Esophagus muscularis mucosa (tissue), 4 donors: ENCODE measurements at regions of chr16 and their contacts with region 1.

Region 1: GRCh38 chr16:56608043-56608875 is at the start of gene MT2A:
- DNase-seq: peak; percentile 98
- H3K4me3 ChIP-seq: peak within 1 kb of the TSS; percentile 56 to 67 (median 62)
- H3K27ac ChIP-seq: peak within 1 kb of the TSS; percentile 84 to 96 (median 92)
- H3K4me1 ChIP-seq: peaks cover 54 to 65% (median 60%) of the 10 kb centered on the region in 4 donors
- H3K27me3 ChIP-seq: no peaks in the 10 kb centered on the region
- CTCF ChIP-seq: no peak
- EP300 ChIP-seq: peak; percentile 97
- POLR2A ChIP-seq: peak; percentile 90
- total RNA-seq, gene MT2A: 27.0 to 528 (median 116) TPM

Region 2: DNA sequence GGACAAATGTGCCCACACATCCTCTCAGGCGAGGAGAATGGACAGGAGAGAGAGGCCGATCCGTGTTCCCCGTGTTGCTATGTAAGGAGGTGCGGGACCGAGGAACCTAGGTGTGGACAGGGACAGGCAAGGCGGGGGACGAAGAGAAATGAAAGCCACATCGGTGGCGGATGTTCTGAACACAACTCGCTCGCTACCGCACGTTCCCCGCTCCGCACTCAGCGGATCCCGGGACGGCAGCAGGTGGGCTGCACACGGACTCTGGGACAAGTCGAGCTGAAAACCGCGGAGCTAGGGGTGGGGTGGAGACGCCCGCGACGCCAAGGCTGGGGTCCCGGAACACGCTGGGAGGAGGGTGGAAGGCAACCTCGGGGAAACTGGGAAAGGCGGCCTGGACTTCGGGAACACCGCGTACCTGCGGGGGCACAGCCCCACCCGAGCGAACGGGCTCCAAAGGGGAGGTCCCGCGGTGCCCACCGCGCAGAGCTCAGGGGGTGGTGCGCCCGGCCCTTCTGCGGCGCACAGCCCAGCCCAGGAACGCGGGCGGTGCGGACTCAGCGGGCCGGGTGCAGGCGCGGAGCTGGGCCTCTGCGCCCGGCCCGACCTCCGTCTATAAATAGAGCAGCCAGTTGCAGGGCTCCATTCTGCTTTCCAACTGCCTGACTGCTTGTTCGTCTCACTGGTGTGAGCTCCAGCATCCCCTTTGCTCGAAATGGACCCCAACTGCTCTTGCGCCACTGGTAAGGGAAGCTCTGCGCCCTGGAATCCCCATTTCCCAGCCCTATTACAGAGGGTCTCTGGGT is 17.1 kb after region 1 on chr16 and contains the start of gene MT1E:
- intact Hi-C with region 1: loop called (anchors 2 kb)
- DNase-seq: no peak
- H3K4me3 ChIP-seq: peak within 1 kb of the TSS; percentile 61 to 78 (median 72)
- H3K27ac ChIP-seq: peak within 1 kb of the TSS; percentile 88 to 94 (median 92)
- H3K4me1 ChIP-seq: peaks cover 20 to 40% (median 30%) of the 10 kb centered on the region in 4 donors
- H3K27me3 ChIP-seq: no peaks in the 10 kb centered on the region
- CTCF ChIP-seq: no peak
- EP300 ChIP-seq: peak; percentile 92
- POLR2A ChIP-seq: peak; percentile 92
- total RNA-seq, gene MT1E: 57.7 to 428 (median 146) TPM

Region 3: GRCh38 chr16:56681939-56682702 is 73.9 kb after region 1 on chr16 and contains the start of gene MT1X:
- intact Hi-C with region 1: loop called (anchors 2 kb)
- DNase-seq: peak; percentile 98
- H3K4me3 ChIP-seq: peak within 1 kb of the TSS; percentile 51 to 68 (median 62)
- H3K27ac ChIP-seq: peak within 1 kb of the TSS; percentile 67 to 86 (median 84)
- H3K4me1 ChIP-seq: peaks cover 35 to 50% (median 42%) of the 10 kb centered on the region in 4 donors
- H3K27me3 ChIP-seq: peaks cover 0 to 3% (median 0%) of the 10 kb centered on the region in 4 donors
- CTCF ChIP-seq: no peak
- EP300 ChIP-seq: peak; percentile 98
- POLR2A ChIP-seq: peak; percentile 99
- total RNA-seq, gene MT1X: 283 to 1,221 (median 512) TPM

Region 4: DNA sequence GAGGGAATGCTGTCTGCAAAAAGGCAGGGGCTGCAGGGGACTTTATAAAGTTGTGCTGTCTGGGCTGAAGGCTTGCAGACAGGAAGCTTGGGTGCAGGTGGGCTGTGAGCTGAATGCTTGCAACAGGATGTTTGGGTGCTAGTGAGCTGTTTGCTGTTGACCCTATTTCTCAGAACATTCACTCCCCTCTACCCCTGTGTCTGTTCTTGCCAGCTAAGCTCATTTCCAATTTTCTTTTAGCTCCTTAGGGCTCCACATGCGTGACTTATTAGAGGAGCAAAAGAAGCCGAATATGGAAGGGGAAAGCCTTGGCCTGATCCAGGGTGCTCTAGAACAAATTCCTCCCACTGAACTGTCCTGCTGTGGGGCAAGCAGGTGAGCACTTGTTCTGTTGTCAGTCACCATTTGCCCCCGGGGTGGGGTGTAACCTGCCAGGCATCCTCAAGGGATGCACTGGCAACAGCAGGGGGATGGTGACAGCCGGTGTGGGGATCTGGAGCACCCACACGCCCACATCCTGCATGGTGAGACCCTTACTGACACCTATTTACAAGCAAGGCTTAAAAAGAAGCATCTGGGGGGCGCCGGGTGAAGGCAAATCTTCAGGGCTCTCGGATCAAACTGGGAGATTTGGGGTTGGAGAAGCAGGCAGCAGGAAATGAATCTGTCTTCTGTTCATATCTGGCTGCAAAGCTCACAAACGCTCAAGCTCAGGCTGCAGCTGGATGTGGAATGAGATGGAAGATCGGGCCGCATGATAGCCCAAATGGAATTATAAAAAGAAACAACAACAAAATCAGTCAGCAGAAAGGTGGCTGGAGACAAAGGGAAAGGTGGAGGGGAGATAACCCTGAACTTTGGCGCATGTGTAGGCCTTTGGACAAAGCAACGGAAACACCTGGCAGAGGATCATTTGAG is 100.5 kb after region 1 on chr16:
- intact Hi-C with region 1: no loop called
- DNase-seq: no peak
- H3K4me3 ChIP-seq: no peak overlapping the region
- H3K27ac ChIP-seq: no peak overlapping the region
- H3K4me1 ChIP-seq: no peaks in the 10 kb centered on the region
- H3K27me3 ChIP-seq: no peaks in the 10 kb centered on the region
- CTCF ChIP-seq: no peak
- EP300 ChIP-seq: no peak
- POLR2A ChIP-seq: no peak